Adrenal gland (tissue), 19 donors: ENCODE measurements at regions of chr2 and their contacts with region 1.

Region 1: GRCh38 chr2:11778923-11779757 is 32.7 kb downstream of the LPIN1 start:
- DNase-seq: peak; percentile 70 to 89 (median 80)
- H3K4me3 ChIP-seq: no peak overlapping the region
- H3K27ac ChIP-seq: no peak overlapping the region
- H3K4me1 ChIP-seq: peaks cover 0 to 14% of the 10 kb centered on the region in 2 donors
- H3K27me3 ChIP-seq: no peaks in the 10 kb centered on the region
- CTCF ChIP-seq: peak; percentile 95 to 99 (median 97)
- POLR2A ChIP-seq: no peak

Region 2: DNA sequence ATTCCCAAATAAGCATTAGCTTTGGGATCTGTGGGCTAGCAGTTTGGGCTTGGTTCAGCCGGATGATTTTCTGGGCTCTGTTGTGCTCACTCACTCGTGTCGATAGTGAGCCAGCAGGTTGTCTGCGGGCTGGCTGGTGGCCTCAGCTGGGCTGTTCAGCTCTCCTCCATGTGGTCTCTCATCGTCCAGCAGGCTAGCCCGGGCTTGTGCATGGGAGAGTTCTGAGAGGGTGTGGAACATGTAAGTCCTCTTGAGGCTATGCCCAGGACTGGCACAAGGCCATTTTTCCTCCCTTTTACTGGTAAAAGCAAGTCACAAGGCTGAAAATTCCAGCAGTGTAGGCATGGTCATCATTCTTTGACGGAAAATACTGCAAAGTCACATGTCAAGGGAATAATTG is 147.7 kb before region 1 on chr2:
- intact Hi-C with region 1: no loop called
- DNase-seq: no peak
- H3K4me3 ChIP-seq: no peak overlapping the region
- H3K27ac ChIP-seq: no peak overlapping the region
- H3K4me1 ChIP-seq: no peaks in the 10 kb centered on the region
- H3K27me3 ChIP-seq: no peaks in the 10 kb centered on the region
- CTCF ChIP-seq: no peak
- POLR2A ChIP-seq: no peak

Region 3: DNA sequence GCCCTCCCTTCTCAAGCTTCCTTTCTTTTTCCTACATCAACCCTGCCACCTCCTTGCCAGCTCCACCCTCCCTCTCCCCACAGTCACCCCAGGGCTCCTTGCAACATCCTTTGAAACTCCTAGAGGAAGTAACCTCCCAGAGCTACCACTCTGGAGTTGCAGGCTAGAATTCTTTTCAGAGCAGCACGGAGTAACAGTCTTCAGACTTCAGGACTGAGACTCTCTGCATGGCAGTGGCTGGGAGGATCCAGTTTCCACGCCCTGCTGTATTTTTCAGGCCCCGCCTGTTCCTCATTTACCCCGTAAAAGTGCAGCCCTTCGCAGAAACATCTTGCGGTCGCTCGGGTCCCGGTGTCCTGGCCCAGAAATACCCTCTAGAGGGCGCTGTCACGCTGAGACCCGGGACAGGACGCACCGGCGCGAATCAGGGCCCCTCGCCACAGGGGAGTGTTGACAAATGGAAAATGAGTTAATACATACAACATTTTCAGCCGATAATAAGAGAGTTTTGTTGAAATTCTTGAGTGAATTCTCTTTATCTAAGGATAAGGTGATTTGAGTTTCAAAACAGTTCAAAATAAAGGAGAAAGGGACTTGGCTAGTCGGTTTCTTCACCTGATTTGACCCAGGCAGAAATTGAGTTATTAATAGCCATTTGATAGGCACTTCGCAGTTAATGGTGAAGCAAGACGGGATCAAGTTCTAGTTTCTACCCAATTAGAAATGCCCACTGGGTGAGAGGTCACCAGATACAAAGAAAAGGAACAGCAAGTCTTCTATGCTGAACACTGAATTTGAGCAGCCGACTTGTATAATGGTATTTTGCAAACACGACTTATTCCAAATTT is 90.7 kb before region 1 on chr2:
- intact Hi-C with region 1: loop called (anchors 2 to 5 kb)
- DNase-seq: peak; percentile 81 to 94 (median 87)
- H3K4me3 ChIP-seq: peak overlapping the region in 1 of 4 donors; percentile 31
- H3K27ac ChIP-seq: peak overlapping the region in 2 of 5 donors; percentile 65 to 67
- H3K4me1 ChIP-seq: peaks cover 6 to 15% of the 10 kb centered on the region in 2 donors
- H3K27me3 ChIP-seq: no peaks in the 10 kb centered on the region
- CTCF ChIP-seq: peak; percentile 79 to 95 (median 88)
- POLR2A ChIP-seq: no peak